Body of pancreas (tissue), 4 donors: ENCODE measurements at regions of chr3 and their contacts with region 1.

Region 1: DNA sequence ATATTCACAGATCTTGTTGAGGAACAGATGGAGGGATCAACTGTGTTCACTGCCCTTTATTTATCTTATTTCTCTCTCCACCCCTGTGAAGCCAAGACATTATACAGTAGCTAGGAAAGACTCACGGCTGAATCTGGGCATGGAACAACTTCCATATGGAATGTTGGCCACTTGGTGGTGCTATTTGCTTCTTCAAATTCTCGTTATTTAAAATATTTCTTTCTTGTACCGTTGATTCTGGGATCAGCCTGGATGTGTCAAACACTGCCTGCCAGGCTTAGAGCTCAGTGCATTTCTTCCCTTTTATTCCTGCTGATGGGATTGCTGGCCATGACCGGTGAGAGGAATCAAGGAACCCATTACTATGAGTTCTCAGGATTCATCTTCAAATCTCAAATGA is 17.5 kb upstream of the GASK1A start:
- DNase-seq: peak; percentile 28 to 57 (median 46)
- ATAC-seq: peak; percentile 30
- H3K4me3 ChIP-seq: no peak overlapping the region
- H3K27ac ChIP-seq: no peak overlapping the region
- H3K4me1 ChIP-seq: no peaks in the 10 kb centered on the region
- H3K27me3 ChIP-seq: no peaks in the 10 kb centered on the region
- CTCF ChIP-seq: peak; percentile 26 to 72 (median 60)
- POLR2A ChIP-seq: no peak

Region 2: DNA sequence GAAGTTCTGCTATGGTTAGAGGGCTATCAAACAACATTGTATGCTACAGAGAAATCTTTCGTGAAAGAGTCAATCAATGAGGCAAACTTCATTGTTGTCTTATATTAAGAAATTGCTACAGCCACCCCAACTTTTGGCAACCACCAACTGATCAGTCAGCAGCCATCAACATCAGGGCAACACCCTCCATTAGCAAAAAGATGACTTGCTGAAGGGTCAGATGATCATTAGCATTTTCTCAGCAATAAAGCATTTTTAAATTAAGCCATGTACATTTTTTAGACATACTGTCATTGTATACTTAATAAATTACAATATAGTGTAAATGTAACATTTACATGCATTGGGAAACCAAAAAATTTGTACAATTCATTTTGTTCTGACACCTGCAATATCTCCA is 604.3 kb before region 1 on chr3:
- intact Hi-C with region 1: no loop called
- DNase-seq: no peak
- ATAC-seq: no peak
- H3K4me3 ChIP-seq: no peak overlapping the region
- H3K27ac ChIP-seq: no peak overlapping the region
- H3K4me1 ChIP-seq: no peaks in the 10 kb centered on the region
- H3K27me3 ChIP-seq: no peaks in the 10 kb centered on the region
- CTCF ChIP-seq: no peak
- POLR2A ChIP-seq: no peak

Region 3: DNA sequence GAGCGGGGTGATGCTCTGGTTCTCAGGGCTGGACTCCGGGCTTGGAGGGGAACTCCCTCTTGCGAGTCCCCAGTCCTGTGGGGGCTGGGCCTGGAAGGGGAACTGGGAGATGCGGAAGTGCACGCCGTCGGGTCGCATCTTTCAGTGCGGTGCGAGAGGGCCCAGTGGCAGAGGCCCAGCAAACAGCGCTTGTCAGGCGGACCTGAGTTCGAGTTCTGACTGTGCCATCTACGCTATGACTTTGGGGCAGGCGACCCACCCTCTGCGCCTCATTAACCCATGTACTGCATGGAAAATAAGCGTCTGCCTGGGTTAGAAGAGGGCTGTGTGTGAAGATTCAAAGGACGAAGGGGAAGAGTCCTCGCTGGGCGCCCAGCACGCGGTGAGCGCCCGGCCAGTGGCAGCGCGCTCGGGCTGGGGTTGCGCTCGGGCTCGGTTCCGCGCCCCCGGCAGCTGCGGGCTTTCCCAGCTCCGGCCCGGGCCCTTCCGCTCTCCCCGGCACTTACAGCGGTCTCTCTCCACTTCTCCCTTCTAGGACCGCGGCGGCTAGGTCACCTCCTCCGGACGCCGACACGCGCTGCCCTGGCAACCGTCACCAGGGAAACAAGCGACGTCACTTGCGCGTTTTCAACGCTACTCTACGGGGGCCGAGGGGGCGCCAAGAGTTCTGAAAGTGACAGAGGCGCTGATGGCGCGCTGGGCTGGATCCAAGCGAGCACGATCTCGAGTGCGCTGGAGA is 188.8 kb before region 1 on chr3 and contains the start of gene CCDC13:
- intact Hi-C with region 1: no loop called
- DNase-seq: peak; percentile 91 to 97 (median 94)
- ATAC-seq: peak; percentile 96
- H3K4me3 ChIP-seq: peak within 1 kb of the TSS in 1 of 2 donors; percentile 12
- H3K27ac ChIP-seq: peak within 1 kb of the TSS in 3 of 4 donors; percentile 39 to 79 (median 69)
- H3K4me1 ChIP-seq: peaks cover 6% of the 10 kb centered on the region
- H3K27me3 ChIP-seq: no peaks in the 10 kb centered on the region
- CTCF ChIP-seq: no peak
- POLR2A ChIP-seq: peak in 2 of 3 donors; percentile 44 to 57
- total RNA-seq, gene CCDC13: 3.9 to 6.3 TPM

Region 4: DNA sequence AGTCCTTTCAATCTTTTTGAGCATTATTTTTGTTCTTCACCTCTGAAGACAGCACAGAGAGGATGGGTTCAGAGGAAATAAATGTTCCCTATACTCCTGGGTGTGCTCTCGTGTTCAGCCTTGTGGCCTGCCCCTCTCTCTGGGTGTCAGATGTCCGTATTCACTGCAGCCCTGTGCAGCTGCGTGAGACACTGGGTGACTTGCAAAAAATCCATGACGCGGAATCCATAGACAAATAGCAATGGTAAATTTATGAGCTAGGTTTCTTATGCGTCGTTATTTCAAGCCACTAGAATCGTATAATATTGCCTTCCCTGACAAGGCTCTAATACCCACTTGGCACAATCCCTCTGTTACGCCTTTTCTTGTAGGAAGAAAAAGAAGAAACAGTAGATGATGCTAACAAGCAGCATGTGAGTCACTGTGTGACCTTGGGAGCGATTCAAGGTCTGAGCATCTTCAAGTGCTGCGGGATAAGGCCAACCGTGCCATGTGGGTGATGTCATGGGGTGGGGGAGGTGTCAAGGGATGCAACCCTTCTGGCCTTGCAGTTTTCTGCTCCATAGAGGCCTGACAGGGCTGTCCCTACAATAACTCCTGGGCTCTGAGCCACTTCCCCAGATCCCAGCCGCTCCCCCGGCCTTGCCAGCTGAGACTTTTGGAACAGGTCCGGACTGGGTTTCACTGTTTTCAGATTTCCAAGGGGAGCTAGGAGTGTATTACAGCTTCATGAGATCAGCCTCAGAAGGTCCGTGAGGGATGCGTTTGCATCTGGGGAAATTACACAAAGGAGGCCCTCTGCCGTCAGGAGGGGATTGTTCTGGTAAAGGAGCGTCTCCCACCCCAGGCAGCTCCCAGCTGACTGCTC is 191.8 kb after region 1 on chr3:
- intact Hi-C with region 1: loop called (anchors 5 kb)
- DNase-seq: peak; percentile 30 to 54 (median 36)
- ATAC-seq: peak; percentile 57
- H3K4me3 ChIP-seq: no peak overlapping the region
- H3K27ac ChIP-seq: no peak overlapping the region
- H3K4me1 ChIP-seq: no peaks in the 10 kb centered on the region
- H3K27me3 ChIP-seq: no peaks in the 10 kb centered on the region
- CTCF ChIP-seq: no peak
- POLR2A ChIP-seq: no peak

Region 5: GRCh38 chr3:43378066-43378935 is 416.7 kb after region 1 on chr3:
- intact Hi-C with region 1: loop called (anchors 10 kb)
- DNase-seq: peak; percentile 75 to 85 (median 80)
- ATAC-seq: peak; percentile 89
- H3K4me3 ChIP-seq: no peak overlapping the region
- H3K27ac ChIP-seq: no peak overlapping the region
- H3K4me1 ChIP-seq: no peaks in the 10 kb centered on the region
- H3K27me3 ChIP-seq: no peaks in the 10 kb centered on the region
- CTCF ChIP-seq: peak; percentile 56 to 86 (median 75)
- POLR2A ChIP-seq: no peak